ENCODE measurements at regions of chr3 and their contacts with region 1.

Region 1: DNA sequence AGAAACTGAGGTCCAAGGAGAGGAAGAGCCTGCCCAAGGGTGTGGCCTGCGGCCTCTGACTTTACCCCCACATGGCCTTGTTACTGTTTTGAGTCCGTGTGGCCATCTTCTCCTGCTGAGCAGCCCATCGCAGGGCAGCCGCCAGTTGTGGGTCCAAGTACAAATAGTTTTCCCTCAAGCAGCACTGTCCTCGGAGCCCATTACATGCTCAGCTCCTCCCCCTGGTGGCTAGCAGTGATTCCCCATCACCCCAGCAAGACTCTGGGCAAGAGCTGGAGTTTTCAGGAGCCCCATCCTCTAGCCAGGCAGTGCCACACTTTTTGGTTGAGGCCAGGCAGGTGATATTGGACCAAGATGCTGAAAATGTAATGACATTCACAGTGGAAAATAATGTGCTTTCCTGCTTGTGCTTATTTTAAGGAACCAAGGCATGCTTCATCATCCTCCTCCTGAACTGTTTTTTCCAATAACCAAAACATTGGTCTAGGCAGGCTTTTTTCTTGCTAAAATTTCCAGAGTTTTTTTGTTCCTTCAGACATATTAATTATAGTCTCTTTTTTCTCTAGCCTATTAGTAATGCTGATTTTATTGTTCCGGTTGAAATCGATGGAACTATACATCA is 23.2 kb upstream of the VILL start:
- DNase-seq: peak; percentile 74 to 82
- ATAC-seq: peak; percentile 88 to 97
- H3K4me3 ChIP-seq: no peak overlapping the region
- H3K27ac ChIP-seq: no peak overlapping the region
- H3K4me1 ChIP-seq: peaks cover 36% of the 10 kb centered on the region
- CTCF ChIP-seq: peak; percentile 79
- EP300 ChIP-seq: no peak
- POLR2A ChIP-seq: no peak
- RAD21 ChIP-seq: peak; percentile 83 to 84

Region 2: DNA sequence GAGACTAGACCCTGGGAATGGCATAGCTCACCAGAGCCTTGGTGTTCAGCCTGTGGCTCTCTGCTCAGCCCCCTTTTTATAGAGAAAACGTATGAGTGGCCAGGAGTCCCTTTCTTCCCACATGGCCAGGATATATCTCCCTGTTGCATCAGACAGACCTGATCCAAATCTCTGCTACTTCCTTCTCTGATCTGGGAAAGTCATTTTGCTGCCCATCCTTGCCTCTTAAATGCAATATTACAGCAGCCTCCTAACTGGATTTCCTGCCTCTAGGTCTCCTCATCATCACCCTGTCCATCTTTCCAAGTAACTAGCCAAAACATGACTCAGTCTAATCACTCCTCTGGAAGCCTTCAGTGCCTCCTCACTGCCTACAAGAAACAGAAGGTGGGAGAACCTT is 62.8 kb before region 1 on chr3:
- CTCF ChIA-PET with region 1: interaction called, 16 read pairs
- POLR2A ChIA-PET with region 1: no interaction called
- DNase-seq: no peak
- ATAC-seq: no peak; a peak in 1 of 6 replicates
- H3K4me3 ChIP-seq: no peak overlapping the region
- H3K27ac ChIP-seq: peak overlapping the region; percentile 6 to 44; a peak in 2 of 6 replicates
- H3K4me1 ChIP-seq: peaks cover 4% of the 10 kb centered on the region; the same call in 1 of the 3 replicates
- CTCF ChIP-seq: no peak
- EP300 ChIP-seq: no peak
- POLR2A ChIP-seq: no peak
- RAD21 ChIP-seq: no peak

Region 3: GRCh38 chr3:37945807-37946530 is 21.4 kb before region 1 on chr3:
- CTCF ChIA-PET with region 1: interaction called, 74 read pairs
- POLR2A ChIA-PET with region 1: no interaction called
- DNase-seq: peak; percentile 18 to 76
- ATAC-seq: peak; percentile 74 to 88; a peak in 5 of 6 replicates
- H3K4me3 ChIP-seq: no peak overlapping the region
- H3K27ac ChIP-seq: peak overlapping the region; percentile 58 to 75
- H3K4me1 ChIP-seq: peaks cover 28% of the 10 kb centered on the region
- CTCF ChIP-seq: no peak
- EP300 ChIP-seq: no peak
- POLR2A ChIP-seq: no peak
- RAD21 ChIP-seq: no peak

Region 4: GRCh38 chr3:37956723-37957528 is 10.4 kb before region 1 on chr3:
- CTCF ChIA-PET with region 1: interaction called, 74 read pairs
- POLR2A ChIA-PET with region 1: no interaction called
- DNase-seq: no peak
- ATAC-seq: no peak
- H3K4me3 ChIP-seq: no peak overlapping the region
- H3K27ac ChIP-seq: no peak overlapping the region
- H3K4me1 ChIP-seq: 0 out of 3 replicates have a peak, but pooled peaks cover 4% of the 10 kb centered on the region
- CTCF ChIP-seq: no peak
- EP300 ChIP-seq: no peak
- POLR2A ChIP-seq: no peak
- RAD21 ChIP-seq: no peak

Region 5: DNA sequence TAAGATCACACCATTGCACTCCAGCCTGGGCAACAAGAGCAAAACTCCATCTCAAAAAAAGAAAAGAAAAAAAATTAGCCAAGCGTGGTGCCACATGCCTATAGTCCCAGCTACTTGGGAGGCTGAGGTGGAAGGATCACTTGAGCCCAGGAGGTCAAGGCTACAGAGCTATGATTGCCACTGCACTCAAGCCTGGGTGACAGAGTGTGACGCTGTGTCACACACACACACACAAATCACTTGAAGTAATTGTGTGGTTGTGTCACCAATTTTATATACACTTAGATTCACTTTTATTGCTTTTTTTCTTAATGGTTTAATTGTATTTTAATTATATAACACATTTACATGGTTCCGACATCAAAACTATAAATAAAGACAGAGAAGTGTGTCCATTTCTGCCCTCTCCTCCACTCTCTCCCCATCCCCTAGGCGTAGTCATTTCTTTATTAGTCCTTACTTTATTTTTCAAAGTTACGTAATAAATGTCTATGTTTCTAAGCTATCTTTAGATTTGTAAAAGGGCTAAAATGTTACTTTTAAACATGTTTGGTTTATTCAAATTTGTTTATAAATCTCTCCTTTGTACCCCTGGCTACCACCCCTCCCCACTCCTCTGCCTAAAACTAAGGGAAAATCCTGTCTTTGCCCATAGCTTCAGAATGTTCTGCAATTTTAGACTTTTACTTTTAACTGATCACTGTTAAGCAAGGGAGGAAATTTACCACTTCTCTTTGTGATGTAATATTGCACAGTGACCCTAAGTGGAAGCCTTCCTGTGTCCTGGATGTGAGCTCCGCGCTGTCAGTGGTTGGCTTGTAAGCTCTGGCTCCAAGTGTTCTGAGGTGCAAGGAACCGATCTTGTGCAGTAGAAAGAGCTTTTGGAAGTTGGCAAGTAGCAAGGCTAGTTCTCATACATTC is 12.4 kb after region 1 on chr3:
- CTCF ChIA-PET with region 1: interaction called, 26 read pairs
- POLR2A ChIA-PET with region 1: no interaction called
- DNase-seq: no peak
- ATAC-seq: no peak
- H3K4me3 ChIP-seq: no peak overlapping the region
- H3K27ac ChIP-seq: no peak overlapping the region
- H3K4me1 ChIP-seq: no peaks in the 10 kb centered on the region
- CTCF ChIP-seq: no peak
- EP300 ChIP-seq: no peak
- POLR2A ChIP-seq: no peak
- RAD21 ChIP-seq: no peak

Region 6: DNA sequence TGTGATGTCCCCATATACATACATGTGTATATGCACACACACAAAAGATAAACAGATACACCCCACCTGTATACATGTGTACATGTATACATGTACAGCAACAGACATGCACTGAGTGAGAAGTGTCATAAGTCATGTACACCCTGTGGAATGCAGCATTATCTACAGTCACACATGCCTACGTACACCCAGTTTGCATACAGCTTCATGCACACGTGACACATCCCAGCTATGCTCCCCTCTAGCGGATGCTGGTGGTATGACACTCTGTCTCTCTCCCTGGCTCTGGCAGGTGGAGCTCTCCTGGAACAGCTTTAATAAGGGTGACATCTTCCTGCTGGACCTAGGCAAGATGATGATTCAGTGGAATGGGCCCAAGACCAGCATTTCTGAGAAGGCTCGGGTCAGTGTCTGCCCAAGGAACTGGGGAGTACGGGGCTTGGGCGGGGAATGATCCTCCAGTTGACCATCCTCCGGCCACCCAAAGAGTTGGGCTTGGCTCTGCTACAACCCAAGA is 29.5 kb after region 1 on chr3:
- CTCF ChIA-PET with region 1: interaction called, 10 read pairs
- POLR2A ChIA-PET with region 1: no interaction called
- DNase-seq: peak; percentile 86 to 90
- ATAC-seq: peak; percentile 44 to 78; a peak in 4 of 6 replicates
- H3K4me3 ChIP-seq: no peak overlapping the region
- H3K27ac ChIP-seq: no peak overlapping the region
- H3K4me1 ChIP-seq: peaks cover 11% of the 10 kb centered on the region
- CTCF ChIP-seq: peak; percentile 68
- EP300 ChIP-seq: no peak
- POLR2A ChIP-seq: no peak
- RAD21 ChIP-seq: peak; percentile 28 to 41; a peak in 4 of 5 replicates

Measured in A549 (cell line).